Activated CD8-positive, alpha-beta T cell treated with anti-CD3 and anti-CD28 coated beads for 36 hours (primary cell): ENCODE measurements at regions of chr14 and their contacts with region 1.

Region 1: DNA sequence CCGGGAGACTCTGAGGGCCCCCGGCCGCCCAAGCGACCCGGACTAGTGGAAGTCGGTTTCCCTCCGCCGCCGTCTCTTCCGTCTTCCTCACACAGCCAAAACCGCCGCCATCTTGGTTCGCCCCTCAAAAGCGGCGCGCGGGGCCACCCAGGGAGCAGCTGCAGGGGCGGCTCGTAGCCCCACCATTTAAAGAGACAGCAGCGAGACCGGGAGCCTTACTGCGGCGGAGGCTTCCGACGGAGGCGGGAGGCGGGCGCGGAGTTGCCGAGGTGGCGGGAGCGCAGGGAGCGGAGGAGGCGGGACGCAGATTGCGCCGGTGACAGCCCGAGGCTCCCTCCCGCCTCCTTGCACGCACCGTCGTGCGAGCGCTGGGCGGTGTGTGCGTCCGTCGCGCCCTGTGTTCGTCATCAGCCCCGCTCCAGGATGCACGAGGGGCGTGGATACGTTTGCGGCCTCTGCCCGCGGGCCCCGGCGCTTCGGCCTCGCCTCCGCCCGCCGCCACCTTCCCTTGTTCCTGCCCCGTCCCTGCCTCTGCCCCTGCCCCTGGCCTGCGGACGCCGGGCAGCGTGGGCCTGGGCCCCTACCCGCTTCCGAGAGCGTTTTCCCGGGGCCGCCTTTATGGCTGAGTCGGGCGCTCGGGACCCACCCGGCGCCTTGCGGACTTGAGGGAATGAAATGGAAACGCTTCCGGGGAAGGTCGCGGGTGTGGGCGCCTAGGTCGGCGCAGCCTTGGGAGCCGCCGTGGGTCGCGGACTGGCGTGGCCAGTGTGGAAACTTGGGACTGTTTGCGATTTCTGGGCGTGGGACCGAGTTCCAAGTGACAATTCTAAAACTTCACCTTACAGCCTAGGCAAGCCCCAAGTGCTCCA is at the start of gene PPP4R3A:
- DNase-seq: peak; percentile 95
- ATAC-seq: peak; percentile 90
- H3K4me3 Mint-ChIP-seq: peak within 1 kb of the TSS; percentile 95
- H3K27ac Mint-ChIP-seq: peak within 1 kb of the TSS; percentile 100
- H3K4me1 Mint-ChIP-seq: peaks cover 18% of the 10 kb centered on the region
- H3K27me3 Mint-ChIP-seq: no peaks in the 10 kb centered on the region
- CTCF ChIP-seq: no peak
- total RNA-seq, gene PPP4R3A: 106 to 111 TPM

Region 2: GRCh38 chr14:91464615-91465205 is 45.7 kb before region 1 on chr14:
- CTCF ChIA-PET with region 1: interaction called, 3 read pairs
- POLR2A ChIA-PET with region 1: interaction called, 11 read pairs
- intact Hi-C with region 1: no loop called
- DNase-seq: peak; percentile 17
- ATAC-seq: peak; percentile 64
- H3K4me3 Mint-ChIP-seq: no peak overlapping the region
- H3K27ac Mint-ChIP-seq: peak overlapping the region; percentile 83
- H3K4me1 Mint-ChIP-seq: peaks cover 36% of the 10 kb centered on the region
- H3K27me3 Mint-ChIP-seq: no peaks in the 10 kb centered on the region
- CTCF ChIP-seq: no peak

Region 3: GRCh38 chr14:91496790-91497189 is 13.6 kb before region 1 on chr14:
- CTCF ChIA-PET with region 1: interaction called, 3 read pairs
- POLR2A ChIA-PET with region 1: interaction called, 18 read pairs
- intact Hi-C with region 1: no loop called
- DNase-seq: no peak
- ATAC-seq: no peak
- H3K4me3 Mint-ChIP-seq: no peak overlapping the region
- H3K27ac Mint-ChIP-seq: peak overlapping the region; percentile 80
- H3K4me1 Mint-ChIP-seq: peaks cover 72% of the 10 kb centered on the region
- H3K27me3 Mint-ChIP-seq: no peaks in the 10 kb centered on the region
- CTCF ChIP-seq: no peak

Region 4: GRCh38 chr14:91533623-91534022 is 23.2 kb after region 1 on chr14:
- CTCF ChIA-PET with region 1: no interaction called
- POLR2A ChIA-PET with region 1: no interaction called
- intact Hi-C with region 1: no loop called
- DNase-seq: no peak
- ATAC-seq: no peak
- H3K4me3 Mint-ChIP-seq: no peak overlapping the region
- H3K27ac Mint-ChIP-seq: no peak overlapping the region
- H3K4me1 Mint-ChIP-seq: no peaks in the 10 kb centered on the region
- H3K27me3 Mint-ChIP-seq: peaks cover 8% of the 10 kb centered on the region
- CTCF ChIP-seq: no peak

Region 5: DNA sequence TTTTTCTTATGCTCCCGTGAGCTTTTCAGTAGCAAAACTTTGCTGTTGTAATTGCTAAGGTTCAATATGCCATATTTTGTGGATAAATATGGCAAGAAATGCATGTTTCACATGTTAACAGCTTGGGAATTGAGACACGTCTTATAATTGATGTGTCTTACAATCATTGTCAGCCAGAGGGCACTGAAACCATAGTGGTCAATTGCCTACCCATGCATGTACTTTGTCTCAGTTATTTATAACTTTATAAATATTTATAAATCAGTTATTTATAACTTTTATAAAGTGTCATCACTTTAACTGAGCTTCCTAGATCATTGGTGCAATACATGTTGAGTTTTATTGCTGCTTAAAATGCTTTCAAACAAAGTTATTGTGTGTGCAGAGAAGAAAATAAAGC is 139.5 kb after region 1 on chr14:
- CTCF ChIA-PET with region 1: no interaction called
- POLR2A ChIA-PET with region 1: no interaction called
- intact Hi-C with region 1: no loop called
- DNase-seq: peak; percentile 55
- ATAC-seq: peak; percentile 68
- H3K4me3 Mint-ChIP-seq: no peak overlapping the region
- H3K27ac Mint-ChIP-seq: no peak overlapping the region
- H3K4me1 Mint-ChIP-seq: no peaks in the 10 kb centered on the region
- H3K27me3 Mint-ChIP-seq: no peaks in the 10 kb centered on the region
- CTCF ChIP-seq: peak; percentile 80